ENCODE measurements at regions of chr10 and their contacts with region 1.

Region 1: DNA sequence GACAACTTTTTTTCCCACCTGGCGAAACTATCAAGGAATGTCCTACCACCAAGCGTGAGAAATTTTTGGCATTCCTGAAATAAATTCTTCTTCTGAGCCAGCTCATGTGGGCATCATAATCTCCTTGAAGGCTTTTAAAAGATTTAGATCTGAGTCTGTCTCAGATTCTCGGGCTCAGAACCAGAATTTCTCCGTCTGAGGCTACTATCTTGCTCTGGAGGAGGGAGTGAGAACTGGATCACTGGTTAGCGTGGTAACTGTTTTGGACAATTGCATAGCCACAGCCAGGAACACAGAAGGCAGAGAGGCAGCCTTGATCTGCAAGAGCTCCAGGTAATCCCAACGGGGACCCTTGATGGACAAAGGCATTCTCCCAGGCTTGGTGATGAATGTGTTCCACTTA is 1.0 kb upstream of the PLAC9 start:
- DNase-seq: no peak
- ATAC-seq: no peak
- H3K4me3 ChIP-seq: no peak overlapping the region
- H3K27ac ChIP-seq: no peak overlapping the region
- H3K4me1 ChIP-seq: peaks cover 2 to 5% of the 10 kb centered on the region in 2 experiments; a peak in 2 of 4 replicates
- H3K27me3 ChIP-seq: no peaks in the 10 kb centered on the region
- CTCF ChIP-seq: no peak
- POLR2A ChIP-seq: no peak
- RAD21 ChIP-seq: no peak

Region 2: GRCh38 chr10:80064120-80064886 is 67.2 kb before region 1 on chr10:
- CTCF ChIA-PET with region 1: interaction called, 11 read pairs
- POLR2A ChIA-PET with region 1: no interaction called
- RAD21 ChIA-PET with region 1: interaction called in 1 of 2 experiments, 3 read pairs
- intact Hi-C with region 1: no loop called
- DNase-seq: no peak
- ATAC-seq: no peak
- H3K4me3 ChIP-seq: no peak overlapping the region
- H3K27ac ChIP-seq: no peak overlapping the region
- H3K4me1 ChIP-seq: no peaks in the 10 kb centered on the region
- H3K27me3 ChIP-seq: no peaks in the 10 kb centered on the region
- CTCF ChIP-seq: no peak
- POLR2A ChIP-seq: no peak
- RAD21 ChIP-seq: no peak

Region 3: GRCh38 chr10:80118674-80119073 is 12.8 kb before region 1 on chr10:
- CTCF ChIA-PET with region 1: interaction called, 14 read pairs
- POLR2A ChIA-PET with region 1: interaction called, 3 read pairs
- RAD21 ChIA-PET with region 1: no interaction called
- intact Hi-C with region 1: no loop called
- DNase-seq: no peak
- ATAC-seq: no peak
- H3K4me3 ChIP-seq: no peak overlapping the region
- H3K27ac ChIP-seq: no peak overlapping the region
- H3K4me1 ChIP-seq: no peaks in the 10 kb centered on the region
- H3K27me3 ChIP-seq: 0 out of 2 replicates have a peak, but pooled peaks cover 3% of the 10 kb centered on the region
- CTCF ChIP-seq: no peak
- POLR2A ChIP-seq: no peak
- RAD21 ChIP-seq: no peak

Measured in HCT116 (cell line).